HEK293T (cell line): ENCODE measurements at regions of chr17 and their contacts with region 1.

Region 1: DNA sequence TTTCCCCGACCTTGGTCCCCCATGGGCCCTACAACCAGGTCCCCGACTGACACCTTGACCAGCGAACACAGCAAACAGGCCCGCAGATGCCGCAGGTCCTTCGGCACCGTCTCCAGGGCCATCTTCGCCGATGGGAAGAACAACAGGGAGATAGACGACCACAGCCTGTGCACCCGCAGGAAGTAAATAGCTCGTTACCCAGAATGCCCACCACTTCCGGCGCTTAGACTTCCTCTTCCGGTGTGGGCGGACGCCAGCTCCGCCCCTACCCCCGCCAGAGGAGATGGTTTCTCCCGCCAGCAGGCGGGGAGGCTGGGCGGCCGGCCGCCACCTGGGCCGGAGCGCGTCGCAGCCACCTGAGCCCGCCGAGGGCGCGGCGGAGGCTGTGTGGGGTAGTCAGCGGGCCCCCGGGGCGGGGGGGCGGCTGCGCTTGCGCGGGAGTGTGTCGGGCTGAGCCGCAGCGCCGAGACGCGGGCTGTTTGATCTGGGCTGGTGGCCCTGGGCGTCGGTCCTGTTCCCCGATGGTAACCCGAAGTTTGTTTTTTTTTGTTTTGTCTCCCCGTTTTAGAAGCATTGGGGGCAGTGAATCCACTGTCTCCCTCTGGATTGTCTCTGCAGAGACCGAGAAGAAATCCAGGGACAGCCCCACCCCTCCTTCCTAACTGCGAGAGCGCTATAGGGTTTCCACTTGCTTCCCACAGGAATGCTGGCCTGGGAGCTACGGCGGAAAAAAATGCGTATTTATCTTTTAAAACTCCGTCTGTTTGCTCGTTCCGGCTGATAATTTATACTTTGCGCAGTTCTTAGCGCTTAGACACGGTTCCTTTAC is at the start of gene SUPT4H1:
- DNase-seq: peak; percentile 97

Region 2: DNA sequence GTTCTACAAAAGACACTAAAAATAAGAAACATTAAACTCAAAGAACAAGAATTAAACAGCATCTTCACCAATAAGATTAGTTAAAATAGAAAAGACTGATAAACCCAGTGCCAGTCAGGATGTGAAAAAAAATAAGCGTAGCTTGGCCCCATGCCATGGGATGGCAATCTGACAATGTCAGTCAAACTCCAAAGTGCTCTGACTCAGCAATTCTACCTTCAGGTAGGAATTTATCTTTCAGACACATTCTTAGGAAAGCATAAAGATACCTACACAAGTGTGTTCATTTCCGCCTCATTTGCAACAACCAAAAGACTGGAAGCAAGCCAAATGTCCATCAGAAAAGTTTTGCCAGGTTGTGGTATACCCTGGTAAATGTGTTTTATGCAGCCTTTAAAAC is 62.4 kb before region 1 on chr17:
- CTCF ChIA-PET with region 1: no interaction called
- POLR2A ChIA-PET with region 1: no interaction called
- DNase-seq: no peak

Region 3: GRCh38 chr17:58317421-58318064 is 34.7 kb before region 1 on chr17:
- CTCF ChIA-PET with region 1: interaction called, 4 read pairs
- POLR2A ChIA-PET with region 1: interaction called, 27 read pairs
- DNase-seq: peak; percentile 81

Region 4: GRCh38 chr17:58331815-58332777 is 20.1 kb before region 1 on chr17:
- CTCF ChIA-PET with region 1: no interaction called
- POLR2A ChIA-PET with region 1: interaction called, 22 read pairs
- DNase-seq: no peak

Region 5: DNA sequence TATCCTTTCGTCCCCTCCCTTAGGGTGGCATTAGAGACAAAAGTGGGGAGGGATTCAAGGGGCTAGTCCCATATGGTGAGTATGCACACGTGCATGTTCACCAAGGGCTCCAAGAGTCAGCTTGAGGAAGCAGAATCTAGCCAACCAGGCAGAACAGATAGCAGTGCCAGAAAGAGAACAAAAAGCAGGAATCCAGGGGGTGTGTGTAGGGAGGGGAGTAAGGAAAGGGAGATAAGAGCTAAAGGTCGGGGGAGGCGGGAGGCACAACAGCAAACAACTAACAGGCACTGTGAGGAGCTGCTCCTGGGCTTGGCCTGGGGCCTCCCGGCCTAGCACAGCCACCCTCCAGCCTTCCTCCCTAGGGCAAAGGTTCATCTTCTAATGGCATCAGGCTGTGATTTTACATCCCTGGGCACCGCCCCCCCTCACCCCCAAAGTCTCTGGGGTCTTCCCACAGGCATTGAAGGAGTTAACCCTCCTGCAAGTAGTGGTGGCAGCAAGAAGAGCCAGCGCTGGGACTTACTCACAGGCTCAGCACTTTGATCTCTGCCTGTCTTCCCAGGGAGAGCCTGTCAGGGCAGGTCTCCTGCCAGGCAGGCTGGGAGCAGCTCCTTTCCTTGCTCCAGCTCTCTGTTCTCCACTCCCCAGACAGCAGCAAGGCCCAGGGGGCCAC is 12.2 kb after region 1 on chr17:
- CTCF ChIA-PET with region 1: interaction called, 5 read pairs
- POLR2A ChIA-PET with region 1: interaction called, 56 read pairs
- DNase-seq: no peak

Region 6: GRCh38 chr17:58378733-58379510 is 26.7 kb after region 1 on chr17:
- CTCF ChIA-PET with region 1: no interaction called
- POLR2A ChIA-PET with region 1: interaction called, 10 read pairs
- DNase-seq: no peak

Region 7: DNA sequence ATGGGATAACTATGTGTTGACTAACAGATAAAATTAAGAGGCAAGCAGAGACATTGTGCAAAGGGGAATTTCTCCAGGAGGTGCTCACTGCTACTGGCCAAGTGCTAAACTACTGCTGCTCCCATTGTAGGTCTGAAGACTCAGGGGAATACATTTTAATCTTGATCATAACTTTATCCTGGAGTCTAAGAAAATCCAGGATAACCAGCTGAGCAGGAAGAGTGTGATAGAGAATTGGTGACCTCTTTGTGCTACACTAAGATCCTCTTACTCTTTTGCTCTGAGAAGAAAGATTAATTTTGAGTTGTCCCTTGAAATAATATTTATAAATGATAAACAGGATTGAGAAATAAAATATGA is 59.2 kb after region 1 on chr17:
- CTCF ChIA-PET with region 1: interaction called, 15 read pairs
- POLR2A ChIA-PET with region 1: interaction called, 234 read pairs
- DNase-seq: no peak